Aorta (tissue), 5 donors: ENCODE measurements at regions of chr12 and their contacts with region 1.

Region 1: GRCh38 chr12:63802012-63802608 is 22.4 kb downstream of the RXYLT1 start:
- DNase-seq: no peak
- ATAC-seq: no peak
- H3K4me3 ChIP-seq: no peak overlapping the region
- H3K27ac ChIP-seq: no peak overlapping the region
- H3K4me1 ChIP-seq: no peaks in the 10 kb centered on the region
- H3K27me3 ChIP-seq: no peaks in the 10 kb centered on the region

Region 2: DNA sequence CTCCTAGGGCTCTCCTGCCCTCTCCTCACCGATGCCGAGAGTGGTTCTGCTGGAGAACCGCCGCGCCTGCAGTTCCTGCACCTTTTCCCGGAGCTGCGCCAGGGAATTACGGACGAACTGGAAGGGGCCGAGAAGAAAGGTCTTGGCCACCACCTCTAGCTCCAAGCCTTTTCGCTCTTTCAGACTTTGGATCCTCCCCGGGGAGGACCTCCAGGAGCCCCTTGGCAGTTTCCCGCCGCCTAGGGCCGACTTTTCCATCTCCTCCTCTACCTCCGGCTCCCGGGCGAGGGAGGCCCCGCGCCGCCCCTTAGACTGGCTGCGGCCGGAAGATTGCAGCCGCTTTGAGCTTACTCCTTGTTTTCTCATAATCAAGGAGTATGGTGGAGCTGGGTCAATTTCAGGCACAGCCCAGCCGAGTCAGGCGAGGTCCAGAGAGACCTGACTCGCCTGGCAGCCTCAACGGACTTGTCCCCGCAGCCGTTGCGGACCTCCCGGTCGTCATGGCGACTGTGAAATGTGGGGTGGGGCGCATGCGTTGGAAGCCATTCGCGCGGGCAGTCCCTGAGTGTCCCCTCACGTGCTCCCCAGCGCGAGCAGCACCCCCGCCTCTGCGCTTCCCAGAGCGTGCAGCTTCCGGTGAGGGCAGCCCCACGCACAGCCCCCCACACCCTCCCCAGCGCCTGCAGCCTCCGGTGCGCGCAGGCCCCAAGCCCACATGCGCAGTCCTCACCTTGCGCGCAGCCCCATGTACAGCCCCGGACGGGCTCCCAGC is 133.9 kb before region 1 on chr12 and contains the start of gene DPY19L2:
- intact Hi-C with region 1: loop called in 1 of 2 experiments (anchors 10 kb)
- DNase-seq: peak; percentile 64 to 88
- ATAC-seq: peak; percentile 92
- H3K4me3 ChIP-seq: peak within 1 kb of the TSS; percentile 51 to 68
- H3K27ac ChIP-seq: peak within 1 kb of the TSS in 1 of 2 donors; percentile 30
- H3K4me1 ChIP-seq: no peaks in the 10 kb centered on the region
- H3K27me3 ChIP-seq: no peaks in the 10 kb centered on the region
- total RNA-seq, gene DPY19L2: 11.9 to 40.8 TPM